CD4-positive, alpha-beta memory T cell (primary cell): ENCODE measurements at regions of chr3 and their contacts with region 1.

Region 1: DNA sequence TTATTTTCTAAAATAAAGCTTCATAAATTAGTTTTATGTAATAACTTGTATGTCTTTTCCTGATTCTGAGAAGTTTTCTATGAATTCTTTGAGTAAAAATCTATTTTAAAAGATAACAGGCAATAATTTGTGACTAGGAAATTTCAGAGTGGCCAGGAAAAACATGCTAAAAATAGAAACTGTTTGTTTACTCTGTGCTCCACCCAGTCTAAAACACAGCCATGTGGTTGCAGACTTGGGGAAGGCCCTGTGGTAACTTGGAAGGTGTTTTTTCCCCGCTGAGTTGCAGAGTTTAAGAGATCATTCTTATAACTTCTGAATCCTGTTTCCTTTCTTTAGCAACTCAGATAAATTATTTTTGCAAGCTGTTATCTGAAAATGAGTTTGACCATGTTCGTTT is 21.9 kb downstream of the PLCL2 start:
- DNase-seq: peak in 2 of 5 donors; percentile 40 to 60
- H3K4me3 ChIP-seq: no peak overlapping the region
- H3K4me3 Mint-ChIP-seq: peak overlapping the region in 7 of 8 donors; percentile 25 to 80 (median 62)
- H3K27ac ChIP-seq: no peak overlapping the region
- H3K27ac Mint-ChIP-seq: peak overlapping the region in 6 of 7 donors; percentile 42 to 85 (median 52)
- H3K4me1 ChIP-seq: peaks cover 93% of the 10 kb centered on the region
- H3K4me1 Mint-ChIP-seq: peaks cover 66 to 90% (median 76%) of the 10 kb centered on the region in 4 donors
- H3K27me3 ChIP-seq: no peaks in the 10 kb centered on the region
- H3K27me3 Mint-ChIP-seq: no peaks in the 10 kb centered on the region

Region 2: DNA sequence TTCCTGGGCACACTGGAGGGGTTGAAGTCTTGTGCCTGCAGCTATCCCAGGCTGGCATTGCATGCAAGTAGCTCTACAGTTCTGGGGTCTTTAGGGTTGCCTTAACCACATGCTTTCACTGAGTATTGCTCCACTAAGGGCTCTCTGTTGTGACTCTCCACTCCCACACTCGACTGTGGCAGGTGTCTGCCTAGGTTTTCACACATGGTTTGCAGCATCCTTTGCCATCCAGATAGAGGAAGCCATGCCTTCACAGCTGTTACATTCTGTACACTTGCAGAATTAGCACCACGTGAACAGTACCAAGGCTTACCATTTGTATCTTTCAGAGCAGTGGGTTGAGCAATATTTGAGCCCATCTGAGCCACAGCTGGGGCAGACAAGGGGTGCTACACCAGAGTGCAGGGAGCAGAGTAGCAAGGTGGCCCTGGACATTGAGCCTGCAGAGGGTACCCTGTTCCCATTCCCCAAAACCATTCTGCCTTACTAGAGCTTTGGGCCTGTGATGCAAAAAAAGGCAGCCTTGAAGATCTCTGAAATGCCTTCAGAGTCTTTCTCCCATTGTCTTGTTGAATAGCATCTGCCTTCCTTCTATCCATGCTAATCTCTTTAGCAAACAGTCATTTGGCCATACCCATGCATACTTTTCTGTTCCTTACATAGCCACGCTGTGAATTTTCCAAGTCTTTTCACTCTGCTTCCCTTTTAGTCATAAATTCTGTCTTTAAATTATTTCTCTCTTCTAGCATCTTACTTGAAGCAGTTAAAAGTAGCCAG is 117.2 kb before region 1 on chr3:
- CTCF ChIA-PET with region 1: no interaction called
- POLR2A ChIA-PET with region 1: no interaction called
- intact Hi-C with region 1: no loop called
- DNase-seq: peak in 1 of 5 donors; percentile 8
- H3K4me3 ChIP-seq: no peak overlapping the region
- H3K4me3 Mint-ChIP-seq: no peak overlapping the region
- H3K27ac ChIP-seq: no peak overlapping the region
- H3K27ac Mint-ChIP-seq: no peak overlapping the region
- H3K4me1 ChIP-seq: peaks cover 5% of the 10 kb centered on the region
- H3K4me1 Mint-ChIP-seq: peaks cover 5 to 16% (median 13%) of the 10 kb centered on the region in 4 donors
- H3K27me3 ChIP-seq: no peaks in the 10 kb centered on the region
- H3K27me3 Mint-ChIP-seq: peaks cover 2 to 8% of the 10 kb centered on the region in 2 donors

Region 3: GRCh38 chr3:16936233-16936632 is 29.6 kb after region 1 on chr3:
- CTCF ChIA-PET with region 1: no interaction called
- POLR2A ChIA-PET with region 1: no interaction called
- intact Hi-C with region 1: loop called (anchors 5 kb)
- DNase-seq: peak in 4 of 5 donors; percentile 29 to 42 (median 32)
- H3K4me3 ChIP-seq: no peak overlapping the region
- H3K4me3 Mint-ChIP-seq: peak overlapping the region; percentile 16 to 81 (median 80)
- H3K27ac ChIP-seq: no peak overlapping the region
- H3K27ac Mint-ChIP-seq: peak overlapping the region; percentile 24 to 87 (median 79)
- H3K4me1 ChIP-seq: peaks cover 88% of the 10 kb centered on the region
- H3K4me1 Mint-ChIP-seq: peaks cover 72 to 98% (median 83%) of the 10 kb centered on the region in 4 donors
- H3K27me3 ChIP-seq: no peaks in the 10 kb centered on the region
- H3K27me3 Mint-ChIP-seq: no peaks in the 10 kb centered on the region

Region 4: GRCh38 chr3:16993227-16993626 is 86.5 kb after region 1 on chr3:
- CTCF ChIA-PET with region 1: no interaction called
- POLR2A ChIA-PET with region 1: no interaction called
- intact Hi-C with region 1: loop called (anchors 5 kb)
- DNase-seq: no peak
- H3K4me3 ChIP-seq: no peak overlapping the region
- H3K4me3 Mint-ChIP-seq: peak overlapping the region in 1 of 8 donors; percentile 33
- H3K27ac ChIP-seq: no peak overlapping the region
- H3K27ac Mint-ChIP-seq: peak overlapping the region in 1 of 7 donors; percentile 4
- H3K4me1 ChIP-seq: peaks cover 82% of the 10 kb centered on the region
- H3K4me1 Mint-ChIP-seq: peaks cover 69 to 95% (median 85%) of the 10 kb centered on the region in 4 donors
- H3K27me3 ChIP-seq: no peaks in the 10 kb centered on the region
- H3K27me3 Mint-ChIP-seq: no peaks in the 10 kb centered on the region

Region 5: GRCh38 chr3:17136136-17136721 is 229.5 kb after region 1 on chr3:
- CTCF ChIA-PET with region 1: no interaction called
- POLR2A ChIA-PET with region 1: no interaction called
- intact Hi-C with region 1: no loop called
- DNase-seq: no peak
- H3K4me3 ChIP-seq: no peak overlapping the region
- H3K4me3 Mint-ChIP-seq: no peak overlapping the region
- H3K27ac ChIP-seq: no peak overlapping the region
- H3K27ac Mint-ChIP-seq: peak overlapping the region in 2 of 7 donors; percentile 18 to 75
- H3K4me1 ChIP-seq: no peaks in the 10 kb centered on the region
- H3K4me1 Mint-ChIP-seq: peaks cover 0 to 4% (median under 1%) of the 10 kb centered on the region in 4 donors
- H3K27me3 ChIP-seq: no peaks in the 10 kb centered on the region
- H3K27me3 Mint-ChIP-seq: no peaks in the 10 kb centered on the region